PC-9 (cell line): ENCODE measurements at regions of chr1 and their contacts with region 1.

Region 1: DNA sequence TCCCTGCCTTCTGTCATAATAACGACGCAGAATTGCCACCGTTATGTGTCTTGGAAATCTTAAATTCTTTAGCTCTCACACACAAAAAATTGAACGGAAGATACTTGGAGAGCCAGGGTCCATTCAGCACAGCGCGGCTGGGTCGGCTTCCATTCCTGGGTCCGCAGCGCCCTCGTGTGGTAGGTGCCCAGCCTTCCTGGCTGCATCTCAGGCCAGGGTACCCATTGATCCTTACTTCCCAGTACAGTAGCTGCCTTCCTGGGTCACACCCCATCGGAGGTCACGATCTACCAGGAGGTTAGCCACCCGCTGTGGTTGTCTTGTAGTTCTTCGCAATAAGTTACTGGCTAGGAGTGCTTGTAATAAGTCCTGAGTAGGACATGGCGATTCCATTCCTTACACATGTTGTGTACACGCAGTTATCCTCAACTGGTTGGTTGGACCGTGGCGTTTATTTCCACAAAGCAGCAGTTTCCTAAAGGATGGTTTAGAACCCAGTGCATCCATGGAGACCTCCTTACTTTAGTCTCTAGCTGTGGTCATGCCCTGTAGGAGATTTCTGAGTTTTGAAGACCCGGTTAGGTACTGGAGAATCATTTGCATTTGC is 9.9 kb upstream of the MTARC1 start:
- DNase-seq: peak in 1 of 2 experiments; percentile 81
- H3K4me3 ChIP-seq: no peak overlapping the region
- H3K27ac ChIP-seq: no peak overlapping the region
- H3K4me1 ChIP-seq: no peaks in the 10 kb centered on the region
- H3K27me3 ChIP-seq: no peaks in the 10 kb centered on the region
- CTCF ChIP-seq: peak; percentile 94

Region 2: GRCh38 chr1:220113136-220113695 is 663.6 kb before region 1 on chr1:
- CTCF ChIA-PET with region 1: no interaction called
- POLR2A ChIA-PET with region 1: no interaction called
- intact Hi-C with region 1: loop called (anchors 1 kb)
- DNase-seq: no peak
- H3K4me3 ChIP-seq: no peak overlapping the region
- H3K27ac ChIP-seq: no peak overlapping the region
- H3K4me1 ChIP-seq: no peaks in the 10 kb centered on the region
- H3K27me3 ChIP-seq: no peaks in the 10 kb centered on the region
- CTCF ChIP-seq: peak; percentile 56

Region 3: DNA sequence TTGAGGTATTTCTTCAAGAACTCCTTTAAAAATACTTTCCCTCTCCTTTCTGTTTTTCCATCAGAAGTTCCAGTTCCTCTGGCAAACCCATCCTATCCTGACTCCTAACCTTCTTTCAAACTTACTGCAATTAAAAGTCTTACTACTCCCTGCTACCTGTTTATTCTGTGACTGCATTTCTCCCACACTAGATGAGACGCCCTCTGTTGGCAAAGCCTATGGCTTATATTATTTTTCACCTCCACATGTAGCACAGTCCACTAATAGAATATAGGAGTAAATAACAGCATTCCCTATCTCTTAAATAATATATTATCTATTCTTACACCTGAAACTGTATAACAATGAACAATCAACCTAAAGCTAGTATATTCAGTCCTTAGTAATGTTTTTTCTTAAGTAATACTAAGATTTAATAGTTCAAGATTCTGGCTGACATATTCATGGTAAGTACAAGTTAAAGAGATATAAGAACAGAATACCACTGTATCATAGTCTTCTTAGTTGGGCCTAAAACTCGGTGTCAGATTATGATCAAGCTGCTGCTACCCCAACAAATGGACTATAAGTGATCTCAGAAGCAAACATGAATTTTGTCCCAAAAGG is 559.3 kb before region 1 on chr1:
- CTCF ChIA-PET with region 1: no interaction called
- POLR2A ChIA-PET with region 1: no interaction called
- intact Hi-C with region 1: loop called (anchors 1 kb)
- DNase-seq: peak in 1 of 2 experiments; percentile 5
- H3K4me3 ChIP-seq: no peak overlapping the region
- H3K27ac ChIP-seq: no peak overlapping the region
- H3K4me1 ChIP-seq: no peaks in the 10 kb centered on the region
- H3K27me3 ChIP-seq: no peaks in the 10 kb centered on the region
- CTCF ChIP-seq: peak; percentile 56

Region 4: GRCh38 chr1:220294846-220295301 is 481.9 kb before region 1 on chr1:
- CTCF ChIA-PET with region 1: interaction called, 4 read pairs
- POLR2A ChIA-PET with region 1: no interaction called
- intact Hi-C with region 1: loop called (anchors 5 kb)
- DNase-seq: no peak
- H3K4me3 ChIP-seq: no peak overlapping the region
- H3K27ac ChIP-seq: no peak overlapping the region
- H3K4me1 ChIP-seq: no peaks in the 10 kb centered on the region
- H3K27me3 ChIP-seq: no peaks in the 10 kb centered on the region
- CTCF ChIP-seq: no peak

Region 5: GRCh38 chr1:220462776-220463175 is 314.0 kb before region 1 on chr1:
- CTCF ChIA-PET with region 1: no interaction called
- POLR2A ChIA-PET with region 1: no interaction called
- intact Hi-C with region 1: no loop called
- DNase-seq: peak in 1 of 2 experiments; percentile 67
- H3K4me3 ChIP-seq: no peak overlapping the region
- H3K27ac ChIP-seq: no peak overlapping the region
- H3K4me1 ChIP-seq: no peaks in the 10 kb centered on the region
- H3K27me3 ChIP-seq: no peaks in the 10 kb centered on the region
- CTCF ChIP-seq: no peak; the same call in 1 of the 2 replicates

Region 6: DNA sequence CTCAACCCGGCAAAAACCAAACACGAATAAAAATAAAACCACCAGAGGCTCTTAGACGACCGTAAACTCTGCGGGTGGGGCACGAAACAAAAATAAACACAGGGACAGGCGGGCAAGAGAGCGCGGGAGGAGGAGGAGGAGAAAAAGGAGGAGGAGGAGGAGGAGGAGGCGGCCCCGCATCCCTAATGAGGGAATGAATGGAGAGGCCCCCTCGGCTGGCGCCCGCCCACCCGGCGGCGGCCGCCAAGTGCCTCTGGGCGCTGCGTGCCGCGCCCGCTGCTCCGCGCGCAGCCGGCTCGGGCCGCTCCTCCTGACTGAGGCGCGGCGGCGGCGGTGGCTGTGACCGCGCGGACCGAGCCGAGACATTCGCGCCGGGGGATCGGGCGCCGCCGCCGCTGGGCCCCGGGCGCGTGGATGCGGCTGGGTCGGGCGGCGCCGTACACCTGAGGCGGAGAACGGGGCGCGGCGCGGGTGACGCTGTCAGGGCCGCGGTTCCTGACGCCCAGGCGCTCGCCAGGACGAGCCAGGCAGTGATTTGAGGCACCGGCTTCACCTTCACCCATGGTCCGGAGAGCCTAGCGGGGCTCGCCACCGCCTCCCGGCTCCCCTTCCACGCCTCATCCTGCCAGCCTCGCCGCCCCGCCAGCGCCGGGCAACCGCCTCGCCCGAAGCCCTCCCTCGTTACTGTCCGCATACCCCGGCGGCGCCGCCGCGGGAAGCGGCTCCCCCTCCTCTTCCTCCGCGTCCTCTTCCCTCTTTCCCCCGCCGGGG is 248.7 kb before region 1 on chr1 and contains the start of gene MARK1:
- CTCF ChIA-PET with region 1: interaction called, 3 read pairs
- POLR2A ChIA-PET with region 1: no interaction called
- intact Hi-C with region 1: loop called (anchors 5 kb)
- DNase-seq: peak; percentile 38 to 64
- H3K4me3 ChIP-seq: peak within 1 kb of the TSS; percentile 97
- H3K27ac ChIP-seq: no peak within 1 kb of the TSS
- H3K4me1 ChIP-seq: peaks cover 28% of the 10 kb centered on the region
- H3K27me3 ChIP-seq: no peaks in the 10 kb centered on the region
- CTCF ChIP-seq: no peak
- total RNA-seq, gene MARK1: 0.93 and 1.9 TPM in 2 replicates

Region 7: DNA sequence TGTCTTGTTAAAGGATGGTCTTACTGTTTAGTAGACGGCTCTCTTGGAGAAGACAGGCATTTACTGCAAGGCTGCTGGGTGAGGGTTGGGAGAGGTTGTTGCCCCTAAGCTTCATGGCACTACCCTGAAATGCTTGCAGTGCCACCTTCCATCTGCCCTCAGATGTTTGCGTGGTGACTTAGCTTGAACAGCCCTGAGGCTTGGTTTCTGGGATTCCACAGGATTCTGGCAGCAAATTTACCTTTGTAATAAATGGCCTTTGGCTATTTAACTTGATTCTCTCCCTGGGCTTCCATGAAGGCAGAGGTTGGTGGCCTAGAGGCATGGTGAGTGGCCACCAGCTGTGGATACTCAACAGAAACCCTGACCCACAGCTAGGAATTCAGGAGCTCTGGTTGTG is 21.5 kb after region 1 on chr1:
- CTCF ChIA-PET with region 1: interaction called, 4 read pairs
- POLR2A ChIA-PET with region 1: interaction called, 4 read pairs
- intact Hi-C with region 1: loop called (anchors 1 kb)
- DNase-seq: peak; percentile 71 to 76
- H3K4me3 ChIP-seq: no peak overlapping the region
- H3K27ac ChIP-seq: peak overlapping the region; percentile 28; the same call in 1 of the 2 replicates
- H3K4me1 ChIP-seq: peaks cover 19% of the 10 kb centered on the region
- H3K27me3 ChIP-seq: no peaks in the 10 kb centered on the region
- CTCF ChIP-seq: no peak